ENCODE measurements at regions of chr6 and their contacts with region 1.

Region 1: DNA sequence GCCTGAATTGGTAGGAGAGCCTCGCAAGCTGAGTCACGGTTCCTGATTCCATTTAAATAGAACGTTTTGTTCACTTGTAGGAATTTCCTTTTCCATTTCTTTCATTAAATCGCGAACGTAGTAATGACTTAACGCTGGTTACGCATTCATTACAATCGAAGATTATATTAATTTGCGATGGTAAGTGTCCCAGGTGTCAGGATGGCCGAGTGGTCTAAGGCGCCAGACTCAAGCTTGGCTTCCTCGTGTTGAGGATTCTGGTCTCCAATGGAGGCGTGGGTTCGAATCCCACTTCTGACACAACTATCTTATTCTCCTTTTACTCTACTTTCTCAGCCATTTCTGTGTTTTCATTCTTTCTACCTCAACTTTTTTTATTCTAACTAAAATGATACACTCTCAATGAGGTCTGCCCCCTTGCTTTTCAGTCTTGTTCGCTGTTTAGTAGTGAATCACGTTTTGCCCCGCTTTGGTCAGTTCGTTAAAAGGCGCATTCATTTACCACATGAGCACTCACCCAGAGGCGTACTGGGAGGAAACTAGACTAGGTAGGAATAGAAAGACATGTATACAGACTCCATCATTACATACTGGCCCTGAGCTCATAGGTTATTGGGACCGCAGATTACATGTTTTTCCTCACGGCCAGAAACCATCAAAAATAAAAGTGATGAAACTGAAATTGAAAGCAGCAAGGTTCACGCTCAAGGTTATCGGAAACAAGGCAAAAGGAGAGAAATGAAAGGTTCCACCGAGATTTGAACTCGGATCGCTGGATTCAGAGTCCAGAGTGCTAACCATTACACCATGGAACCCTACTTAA is 17.3 kb upstream of the TRIM27 start:
- DNase-seq: peak; percentile 73
- H3K4me3 Mint-ChIP-seq: peak overlapping the region; percentile 95
- H3K27ac Mint-ChIP-seq: peak overlapping the region; percentile 97
- H3K4me1 Mint-ChIP-seq: peaks cover 59% of the 10 kb centered on the region
- H3K27me3 Mint-ChIP-seq: peaks cover 10% of the 10 kb centered on the region

Region 2: DNA sequence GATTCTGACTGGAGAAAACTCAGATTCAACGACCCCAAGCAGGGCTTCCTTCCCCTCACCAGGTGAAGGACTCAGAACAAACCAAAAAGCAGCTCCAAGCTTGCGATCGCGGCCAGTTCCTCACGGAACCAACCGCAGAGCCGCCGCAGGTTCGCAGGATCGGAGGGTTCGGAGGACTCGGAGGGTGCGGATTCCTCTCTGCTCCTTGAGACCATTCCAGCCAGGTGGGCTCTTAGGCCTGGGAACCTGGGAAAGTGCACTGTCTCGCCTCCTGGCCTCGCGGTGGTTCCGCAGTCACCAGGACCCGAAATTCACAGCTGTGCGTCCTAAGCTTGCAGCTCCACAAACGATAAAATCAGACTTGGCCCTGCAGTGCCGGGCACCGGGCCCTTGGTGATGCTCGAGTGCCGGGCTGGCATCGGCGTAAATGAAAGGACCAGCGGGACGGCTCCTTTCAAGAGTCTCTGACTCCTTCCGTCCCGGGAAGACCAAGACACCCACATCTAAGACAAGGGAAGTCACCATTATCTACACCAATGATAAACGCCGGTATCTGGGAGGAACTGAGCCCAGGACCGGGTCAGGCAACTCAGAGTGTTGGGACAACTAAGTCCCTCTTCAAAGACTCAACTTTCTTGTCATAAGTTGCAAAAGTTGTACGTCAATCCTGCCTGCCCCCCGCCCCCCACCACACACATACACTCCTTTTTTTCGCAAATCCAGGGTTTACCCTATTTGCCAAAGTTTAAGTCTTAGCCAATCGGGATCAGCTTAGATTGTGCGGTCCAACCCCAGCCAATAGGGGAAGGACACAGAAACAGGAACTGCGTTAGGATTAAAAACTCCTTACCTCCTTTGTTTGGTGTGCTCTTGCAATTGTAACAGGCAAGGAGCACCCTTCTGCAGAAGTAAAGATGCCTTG is 1763.3 kb before region 1 on chr6:
- intact Hi-C with region 1: loop called (anchors 1 kb)
- DNase-seq: peak; percentile 66
- H3K4me3 Mint-ChIP-seq: peak overlapping the region; percentile 95
- H3K27ac Mint-ChIP-seq: peak overlapping the region; percentile 93
- H3K4me1 Mint-ChIP-seq: peaks cover 7% of the 10 kb centered on the region
- H3K27me3 Mint-ChIP-seq: peaks cover 36% of the 10 kb centered on the region

Region 3: GRCh38 chr6:27687154-27688013 is 1253.7 kb before region 1 on chr6:
- intact Hi-C with region 1: loop called (anchors 5 kb)
- DNase-seq: peak; percentile 74
- H3K4me3 Mint-ChIP-seq: peak overlapping the region; percentile 88
- H3K27ac Mint-ChIP-seq: peak overlapping the region; percentile 91
- H3K4me1 Mint-ChIP-seq: peaks cover 26% of the 10 kb centered on the region
- H3K27me3 Mint-ChIP-seq: peaks cover 24% of the 10 kb centered on the region

Region 4: GRCh38 chr6:28542440-28543296 is 398.4 kb before region 1 on chr6:
- intact Hi-C with region 1: loop called (anchors 5 kb)
- DNase-seq: peak; percentile 18
- H3K4me3 Mint-ChIP-seq: peak overlapping the region; percentile 77
- H3K27ac Mint-ChIP-seq: peak overlapping the region; percentile 44
- H3K4me1 Mint-ChIP-seq: peaks cover 28% of the 10 kb centered on the region
- H3K27me3 Mint-ChIP-seq: peaks cover 44% of the 10 kb centered on the region

Region 5: DNA sequence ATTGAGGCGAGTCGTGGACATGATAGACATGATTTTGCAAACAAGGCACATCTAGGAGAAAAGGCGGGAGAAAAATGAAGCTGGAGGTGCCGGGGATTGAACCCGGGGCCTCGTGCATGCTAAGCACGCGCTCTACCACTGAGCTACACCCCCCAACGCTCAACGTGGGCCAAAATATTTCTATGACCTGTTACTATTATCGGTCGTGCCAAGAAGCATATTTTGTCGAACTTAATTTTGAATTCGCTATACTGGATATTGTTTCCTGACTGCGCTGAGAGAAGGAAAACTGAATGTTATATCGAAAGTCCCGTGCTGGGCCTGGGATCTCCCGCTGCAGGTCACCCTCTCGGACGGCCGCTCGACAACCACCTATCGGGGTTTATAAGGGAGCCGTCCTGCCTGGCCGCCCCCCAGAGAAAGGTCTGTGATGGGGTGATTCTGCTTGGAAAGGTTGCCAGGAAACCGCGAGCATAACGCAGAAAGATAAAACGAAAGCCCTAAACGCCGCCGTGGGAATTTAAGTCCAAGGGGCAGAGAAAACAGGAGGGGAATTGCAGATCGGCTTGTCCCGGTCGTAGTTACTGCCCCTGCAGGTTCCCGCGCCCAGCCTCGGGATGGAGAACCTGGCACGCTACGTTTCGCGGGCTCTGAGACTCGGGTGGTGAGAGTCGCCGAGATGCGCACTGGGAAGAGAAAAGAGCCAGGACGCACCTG is 77.3 kb before region 1 on chr6:
- intact Hi-C with region 1: loop called (anchors 1 kb)
- DNase-seq: peak; percentile 80
- H3K4me3 Mint-ChIP-seq: peak overlapping the region; percentile 94
- H3K27ac Mint-ChIP-seq: peak overlapping the region; percentile 93
- H3K4me1 Mint-ChIP-seq: peaks cover 47% of the 10 kb centered on the region
- H3K27me3 Mint-ChIP-seq: peaks cover 17% of the 10 kb centered on the region

Region 6: GRCh38 chr6:28923318-28924102 is 17.6 kb before region 1 on chr6 and contains the start of gene TRIM27:
- intact Hi-C with region 1: loop called (anchors 1 kb)
- DNase-seq: peak; percentile 80
- H3K4me3 Mint-ChIP-seq: peak within 1 kb of the TSS; percentile 93
- H3K27ac Mint-ChIP-seq: peak within 1 kb of the TSS; percentile 91
- H3K4me1 Mint-ChIP-seq: peaks cover 33% of the 10 kb centered on the region
- H3K27me3 Mint-ChIP-seq: no peaks in the 10 kb centered on the region
- total RNA-seq, gene TRIM27: 67.2 and 67.4 TPM in 2 replicates

Region 7: GRCh38 chr6:29016559-29017427 is 75.7 kb after region 1 on chr6:
- intact Hi-C with region 1: loop called (anchors 1 kb)
- DNase-seq: peak; percentile 76
- H3K4me3 Mint-ChIP-seq: peak overlapping the region; percentile 87
- H3K27ac Mint-ChIP-seq: peak overlapping the region; percentile 89
- H3K4me1 Mint-ChIP-seq: peaks cover 22% of the 10 kb centered on the region
- H3K27me3 Mint-ChIP-seq: peaks cover 22% of the 10 kb centered on the region

Region 8: GRCh38 chr6:30238174-30238795 is 1297.2 kb after region 1 on chr6:
- intact Hi-C with region 1: no loop called
- DNase-seq: no peak
- H3K4me3 Mint-ChIP-seq: no peak overlapping the region
- H3K27ac Mint-ChIP-seq: no peak overlapping the region
- H3K4me1 Mint-ChIP-seq: no peaks in the 10 kb centered on the region
- H3K27me3 Mint-ChIP-seq: peaks cover 47% of the 10 kb centered on the region

Measured in activated T-helper 1 cell treated with anti-CD3 and anti-CD28 coated beads, Interleukin-12 subunit alpha, Interleukin-12 subunit beta, Interleukin-2, Interleukin-4 antibody, amounts not matched to agents 30 ng/mL and 10 ng/mL and 1 ng/mL, durations not matched to agents 14 hours and 24 hours and 36 hours (primary cell).